ENCODE measurements at regions of chr1 and their contacts with region 1.

Region 1: DNA sequence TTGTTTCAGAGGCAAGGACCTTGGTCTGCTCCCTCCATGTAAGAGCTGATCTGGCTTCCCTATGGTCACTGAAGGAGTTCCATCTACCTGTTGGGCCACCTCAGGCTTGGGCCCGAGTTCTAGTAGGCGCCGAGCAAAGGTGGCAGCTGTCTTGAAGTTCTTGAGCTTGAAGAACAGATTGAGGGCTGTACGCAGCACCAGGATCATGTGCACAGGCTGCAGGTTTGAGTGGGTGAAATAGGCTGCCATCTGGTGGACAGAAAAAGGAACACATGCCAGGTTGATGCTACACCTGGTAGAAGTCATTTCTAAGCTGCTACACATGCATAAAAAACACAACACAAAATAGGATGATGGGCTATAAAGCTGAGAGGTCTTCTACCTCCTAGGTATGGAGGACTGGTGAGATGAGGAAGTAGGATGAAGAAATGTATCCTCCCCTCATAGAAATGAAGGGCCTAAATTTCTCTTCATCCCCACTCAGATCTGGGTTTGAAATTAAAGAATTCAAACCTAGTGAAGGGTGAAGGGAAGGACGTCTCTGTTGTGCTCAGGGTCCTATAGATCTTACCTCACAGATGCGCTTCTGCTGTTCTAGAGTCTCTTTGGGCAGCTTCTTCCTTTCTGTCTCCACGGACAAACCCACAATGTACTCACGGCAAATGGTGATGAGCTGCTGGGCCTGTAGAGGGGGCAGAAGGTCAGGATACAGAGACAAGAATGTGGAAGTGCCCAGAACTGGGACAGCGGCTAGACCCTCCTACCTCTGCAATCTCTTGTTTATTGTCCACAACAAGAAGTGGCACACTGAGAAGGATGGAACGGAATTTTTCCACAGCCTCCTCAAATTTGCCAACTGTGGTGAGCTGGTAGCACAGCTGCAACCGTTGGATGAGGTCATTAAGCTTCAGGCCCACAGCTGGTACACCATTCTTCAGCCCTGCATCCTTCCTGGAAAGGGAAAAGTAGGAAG is 6.6 kb upstream of the PEX19 start:
- DNase-seq: peak; percentile 41 to 79 (median 66)
- H3K4me3 ChIP-seq: no peak overlapping the region
- H3K4me3 Mint-ChIP-seq: peak overlapping the region in 1 of 7 donors; percentile 32
- H3K27ac ChIP-seq: no peak overlapping the region
- H3K27ac Mint-ChIP-seq: peak overlapping the region; percentile 36 to 86 (median 64)
- H3K4me1 ChIP-seq: peaks cover 5% of the 10 kb centered on the region
- H3K4me1 Mint-ChIP-seq: peaks cover 0 to 6% (median 3%) of the 10 kb centered on the region in 3 donors
- H3K27me3 ChIP-seq: no peaks in the 10 kb centered on the region
- H3K27me3 Mint-ChIP-seq: no peaks in the 10 kb centered on the region

Region 2: GRCh38 chr1:160085686-160086455 is 205.7 kb before region 1 on chr1:
- CTCF ChIA-PET with region 1: interaction called, 19 read pairs
- POLR2A ChIA-PET with region 1: no interaction called
- DNase-seq: peak; percentile 48 to 79 (median 69)
- H3K4me3 ChIP-seq: no peak overlapping the region
- H3K4me3 Mint-ChIP-seq: peak overlapping the region in 3 of 7 donors; percentile 6 to 54 (median 32)
- H3K27ac ChIP-seq: no peak overlapping the region
- H3K27ac Mint-ChIP-seq: peak overlapping the region in 4 of 8 donors; percentile 21 to 83 (median 64)
- H3K4me1 ChIP-seq: peaks cover 3% of the 10 kb centered on the region
- H3K4me1 Mint-ChIP-seq: peaks cover 11 to 14% (median 14%) of the 10 kb centered on the region in 3 donors
- H3K27me3 ChIP-seq: peaks cover 13% of the 10 kb centered on the region
- H3K27me3 Mint-ChIP-seq: peaks cover 15 to 24% of the 10 kb centered on the region in 2 donors

Region 3: GRCh38 chr1:160193091-160193819 is 98.3 kb before region 1 on chr1:
- CTCF ChIA-PET with region 1: interaction called, 80 read pairs
- POLR2A ChIA-PET with region 1: no interaction called
- DNase-seq: peak; percentile 58 to 85 (median 76)
- H3K4me3 ChIP-seq: no peak overlapping the region
- H3K4me3 Mint-ChIP-seq: no peak overlapping the region
- H3K27ac ChIP-seq: no peak overlapping the region
- H3K27ac Mint-ChIP-seq: no peak overlapping the region
- H3K4me1 ChIP-seq: peaks cover 3% of the 10 kb centered on the region
- H3K4me1 Mint-ChIP-seq: no peaks in the 10 kb centered on the region
- H3K27me3 ChIP-seq: no peaks in the 10 kb centered on the region
- H3K27me3 Mint-ChIP-seq: peaks cover 2 to 9% of the 10 kb centered on the region in 2 donors

Region 4: DNA sequence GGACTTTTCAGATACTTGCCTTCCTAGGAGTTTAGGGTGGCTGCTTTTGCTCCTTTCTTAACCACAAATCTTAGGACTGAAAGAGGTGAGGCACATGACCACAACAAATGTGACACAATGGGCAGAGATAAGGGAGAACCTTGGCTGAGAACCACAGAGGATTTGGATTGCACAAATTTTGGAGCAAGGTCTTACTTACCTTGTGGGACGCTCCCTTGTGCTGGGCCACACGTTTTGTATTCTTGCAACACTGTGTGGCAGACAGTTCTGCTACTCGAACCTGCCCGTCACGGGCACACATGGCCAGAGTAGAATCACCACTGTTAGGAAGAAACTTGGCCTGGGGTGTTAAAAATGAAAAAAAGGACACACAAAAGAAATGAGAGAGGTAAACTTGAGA is 53.1 kb before region 1 on chr1:
- CTCF ChIA-PET with region 1: interaction called, 10 read pairs
- POLR2A ChIA-PET with region 1: no interaction called
- DNase-seq: no peak
- H3K4me3 ChIP-seq: no peak overlapping the region
- H3K4me3 Mint-ChIP-seq: no peak overlapping the region
- H3K27ac ChIP-seq: no peak overlapping the region
- H3K27ac Mint-ChIP-seq: peak overlapping the region in 3 of 8 donors; percentile 1 to 53 (median 44)
- H3K4me1 ChIP-seq: no peaks in the 10 kb centered on the region
- H3K4me1 Mint-ChIP-seq: peaks cover 15 to 25% (median 19%) of the 10 kb centered on the region in 3 donors
- H3K27me3 ChIP-seq: no peaks in the 10 kb centered on the region
- H3K27me3 Mint-ChIP-seq: no peaks in the 10 kb centered on the region

Region 5: GRCh38 chr1:160261893-160262794 is 29.4 kb before region 1 on chr1 and contains the start of gene DCAF8:
- CTCF ChIA-PET with region 1: interaction called, 35 read pairs
- POLR2A ChIA-PET with region 1: no interaction called
- DNase-seq: peak; percentile 95 to 99 (median 96)
- H3K4me3 ChIP-seq: peak within 1 kb of the TSS; percentile 83
- H3K4me3 Mint-ChIP-seq: peak within 1 kb of the TSS; percentile 90 to 100 (median 97)
- H3K27ac ChIP-seq: peak within 1 kb of the TSS; percentile 92
- H3K27ac Mint-ChIP-seq: peak within 1 kb of the TSS; percentile 96 to 100 (median 98)
- H3K4me1 ChIP-seq: peaks cover 33% of the 10 kb centered on the region
- H3K4me1 Mint-ChIP-seq: peaks cover 36 to 56% (median 50%) of the 10 kb centered on the region in 3 donors
- H3K27me3 ChIP-seq: no peaks in the 10 kb centered on the region
- H3K27me3 Mint-ChIP-seq: peaks cover 0 to 6% of the 10 kb centered on the region in 2 donors
- total RNA-seq, gene DCAF8: 95.6 to 97.0 TPM